ENCODE measurements at regions of chr9 and their contacts with region 1.

Region 1: DNA sequence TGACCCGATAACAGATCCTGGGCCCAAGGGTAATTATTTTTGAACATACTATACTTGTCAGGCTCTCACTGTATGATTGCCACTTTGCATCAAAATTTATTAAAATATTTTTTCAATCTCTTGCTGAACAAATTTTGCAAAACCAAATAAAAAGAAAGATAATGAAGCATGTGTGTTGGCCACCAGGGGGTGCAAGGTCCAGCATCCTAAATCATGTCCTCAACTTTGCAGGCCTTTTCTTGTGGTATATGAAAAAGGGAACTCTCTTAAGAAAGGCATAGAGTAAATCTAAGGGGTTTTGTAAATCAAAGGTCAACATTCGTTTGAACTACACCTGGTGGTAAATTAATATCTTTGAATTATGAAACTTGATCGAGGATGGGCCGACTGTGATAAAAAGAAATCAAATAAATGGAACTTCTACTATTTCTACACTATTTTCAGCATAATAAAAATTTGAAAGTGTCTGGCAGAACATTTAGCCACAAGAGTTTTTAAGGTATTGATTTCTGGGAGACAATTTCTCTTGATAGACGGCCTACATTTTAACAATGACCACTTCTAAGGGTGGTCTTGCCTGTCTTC is 676.5 kb downstream of the DMRTA1 start:
- DNase-seq: peak; percentile 41
- H3K4me3 ChIP-seq: no peak overlapping the region
- H3K27ac ChIP-seq: no peak overlapping the region
- H3K4me1 ChIP-seq: no peaks in the 10 kb centered on the region
- CTCF ChIP-seq: peak; percentile 85

Region 2: GRCh38 chr9:23044549-23044948 is 78.6 kb before region 1 on chr9:
- CTCF ChIA-PET with region 1: no interaction called
- POLR2A ChIA-PET with region 1: no interaction called
- intact Hi-C with region 1: no loop called
- DNase-seq: no peak
- H3K4me3 ChIP-seq: no peak overlapping the region
- H3K27ac ChIP-seq: no peak overlapping the region
- H3K4me1 ChIP-seq: no peaks in the 10 kb centered on the region
- CTCF ChIP-seq: no peak

Region 3: DNA sequence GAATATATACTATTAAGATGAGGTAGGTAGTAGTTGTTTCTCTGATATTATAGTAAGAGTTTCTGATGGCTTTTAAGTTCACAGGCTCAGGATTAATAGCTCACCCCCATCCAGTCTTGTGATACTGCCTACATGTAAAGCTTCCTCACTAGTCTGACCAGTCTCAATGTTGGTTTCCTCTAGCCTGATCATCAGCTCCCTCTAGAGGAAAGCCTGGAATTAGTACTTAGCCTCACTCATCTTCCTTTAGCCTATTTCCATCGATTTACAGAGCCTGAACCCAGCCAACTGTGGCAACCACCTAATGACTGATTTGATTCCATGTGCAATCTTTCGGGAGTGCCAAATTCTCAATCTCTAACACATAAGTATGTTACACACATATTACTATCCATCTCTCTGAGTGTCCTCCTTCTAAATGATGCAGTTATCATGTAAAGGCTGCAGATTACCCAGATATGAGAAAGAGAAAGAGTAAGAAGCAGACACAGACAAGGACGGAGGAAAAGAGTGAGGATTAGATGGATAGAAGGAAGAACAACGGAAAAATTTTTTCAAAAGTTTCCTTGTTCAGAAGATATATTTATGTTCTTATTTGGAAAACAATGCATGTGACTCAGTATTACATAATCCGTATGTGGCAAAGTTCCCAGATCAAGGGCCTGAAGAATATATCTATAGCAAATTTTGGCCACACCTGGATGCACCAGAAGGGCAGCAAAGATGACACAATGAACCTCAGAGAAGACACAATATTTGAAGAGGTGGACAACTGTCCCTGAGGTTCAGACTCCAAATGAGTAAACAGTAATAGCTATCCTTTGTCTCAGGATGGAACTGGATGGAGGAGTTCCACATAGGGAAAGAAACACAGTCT is 369.2 kb after region 1 on chr9:
- CTCF ChIA-PET with region 1: no interaction called
- POLR2A ChIA-PET with region 1: no interaction called
- intact Hi-C with region 1: loop called (anchors 10 kb)
- DNase-seq: peak; percentile 37
- H3K4me3 ChIP-seq: no peak overlapping the region
- H3K27ac ChIP-seq: no peak overlapping the region
- H3K4me1 ChIP-seq: no peaks in the 10 kb centered on the region
- CTCF ChIP-seq: peak; percentile 78

Measured in OCI-LY7 (cell line).